GM13977 (cell line): ENCODE measurements at regions of chr12 and their contacts with region 1.

Region 1: GRCh38 chr12:59403259-59403932 is 192.4 kb upstream of the SLC16A7 start:
- DNase-seq: peak; percentile 10
- CTCF ChIP-seq: peak; percentile 83

Region 2: DNA sequence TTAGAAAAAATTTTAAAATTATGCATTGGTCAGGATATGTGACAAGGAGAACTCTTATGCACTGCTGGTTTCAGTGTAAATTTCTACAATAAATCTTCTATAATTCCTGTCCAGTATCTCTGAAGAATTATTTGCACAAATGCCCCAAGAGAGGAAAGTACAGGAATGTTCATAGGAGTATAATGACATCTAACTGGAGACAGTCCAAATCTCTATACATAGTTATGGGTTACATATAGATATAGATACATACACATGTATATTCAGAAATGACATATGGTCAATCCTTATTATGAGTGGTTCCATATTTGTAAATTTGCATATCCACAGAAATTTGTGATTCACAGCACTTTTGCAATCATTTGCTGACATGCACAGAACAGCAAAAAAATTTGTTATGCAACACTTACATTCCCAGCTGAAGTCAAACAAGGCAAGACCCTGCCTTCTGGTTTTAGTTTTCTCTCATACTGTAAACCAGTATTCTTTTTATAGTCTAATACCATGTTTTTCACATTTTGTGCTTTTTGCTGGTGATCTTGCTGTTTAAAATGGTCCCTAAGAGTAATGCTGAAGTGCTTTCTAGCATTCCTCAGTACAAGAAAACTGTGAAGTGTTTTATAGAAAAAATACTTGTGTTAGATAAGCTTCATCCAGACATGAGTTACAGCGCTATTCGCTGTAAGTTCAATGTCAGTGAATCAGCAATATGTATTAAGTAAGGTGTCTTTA is 296.2 kb after region 1 on chr12:
- in situ Hi-C with region 1: no loop called
- DNase-seq: no peak
- CTCF ChIP-seq: no peak

Region 3: GRCh38 chr12:59808317-59808910 is 405.0 kb after region 1 on chr12:
- in situ Hi-C with region 1: loop called (anchors 25 kb)
- DNase-seq: peak; percentile 45
- CTCF ChIP-seq: peak; percentile 68